BJ (cell line): ENCODE measurements at regions of chr14 and their contacts with region 1.

Region 1: DNA sequence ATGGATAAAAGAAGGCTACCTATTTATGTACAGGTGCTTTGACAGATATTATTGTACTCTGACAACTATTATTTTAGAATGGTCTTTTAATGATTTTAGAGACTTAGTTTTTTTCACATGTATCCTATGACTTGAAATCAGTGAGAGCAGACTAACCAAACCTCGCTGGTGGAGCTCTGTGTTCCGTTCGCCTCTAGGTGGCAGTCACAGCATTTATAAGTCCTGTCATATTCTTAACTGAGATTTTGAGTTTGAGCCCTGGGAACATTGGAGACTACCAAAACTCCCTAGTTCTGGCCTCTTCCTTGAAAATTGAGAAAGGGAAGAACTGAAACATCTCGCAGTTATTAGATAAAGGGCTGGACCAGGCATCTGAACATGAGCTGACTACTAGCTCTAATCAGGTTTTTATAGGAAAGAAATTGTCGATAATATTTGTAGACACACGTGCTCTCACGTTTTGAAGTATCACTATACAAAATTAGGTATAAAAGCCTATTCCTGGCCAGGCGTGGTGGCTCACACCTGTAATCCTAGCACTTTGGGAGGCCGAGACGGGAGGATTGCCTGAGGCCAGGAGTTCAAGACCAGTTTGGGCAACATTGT is 48.3 kb downstream of the TTLL5 start:
- DNase-seq: peak; percentile 20
- H3K4me3 ChIP-seq: no peak overlapping the region
- H3K27me3 ChIP-seq: no peaks in the 10 kb centered on the region
- CTCF ChIP-seq: peak; percentile 78

Region 2: DNA sequence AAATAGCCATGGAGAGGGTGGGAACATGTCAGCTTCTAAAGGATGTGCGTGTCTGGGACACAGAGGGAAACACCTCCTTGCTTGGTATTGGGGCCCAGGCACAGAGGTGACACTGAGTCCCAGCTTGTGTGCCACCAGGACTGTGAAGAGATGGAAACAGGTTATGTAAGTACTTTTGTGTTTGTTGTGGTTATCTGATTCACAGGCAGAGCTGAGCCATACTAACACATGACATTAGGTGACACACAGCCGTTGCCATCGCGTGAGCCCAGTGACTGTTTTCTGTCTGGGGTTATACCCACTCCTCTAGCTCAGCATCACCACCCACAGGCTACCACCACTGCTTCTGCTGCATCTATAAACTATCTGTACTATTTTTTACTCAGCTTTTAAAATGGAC is 143.0 kb before region 1 on chr14:
- CTCF ChIA-PET with region 1: no interaction called
- POLR2A ChIA-PET with region 1: no interaction called
- DNase-seq: no peak
- H3K4me3 ChIP-seq: no peak overlapping the region
- H3K27me3 ChIP-seq: peaks cover 15% of the 10 kb centered on the region
- CTCF ChIP-seq: no peak

Region 3: DNA sequence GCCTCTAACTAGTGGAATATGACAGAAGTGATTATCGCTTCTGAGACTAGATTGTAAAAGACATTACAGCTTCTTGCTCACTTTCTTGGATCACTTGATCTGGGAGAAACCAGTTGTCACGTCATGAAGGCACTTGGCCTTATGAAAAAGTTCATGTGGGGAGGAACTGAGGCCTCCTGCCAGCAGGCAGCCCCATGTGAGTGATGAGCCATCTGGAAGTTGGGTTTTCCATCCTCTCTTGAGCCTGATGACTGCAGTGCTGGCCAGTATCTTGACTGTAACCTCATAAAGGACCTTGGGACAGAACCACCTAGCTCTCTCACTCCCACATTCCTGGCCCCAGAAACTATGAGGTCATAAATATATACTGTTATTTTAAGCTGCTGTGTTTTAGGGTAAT is 20.3 kb before region 1 on chr14:
- CTCF ChIA-PET with region 1: interaction called, 10 read pairs
- POLR2A ChIA-PET with region 1: no interaction called
- DNase-seq: peak; percentile 10
- H3K4me3 ChIP-seq: no peak overlapping the region
- H3K27me3 ChIP-seq: no peaks in the 10 kb centered on the region
- CTCF ChIP-seq: no peak

Region 4: GRCh38 chr14:75794615-75795038 is 85.3 kb after region 1 on chr14:
- CTCF ChIA-PET with region 1: interaction called, 34 read pairs
- POLR2A ChIA-PET with region 1: no interaction called
- DNase-seq: peak; percentile 10
- H3K4me3 ChIP-seq: no peak overlapping the region
- H3K27me3 ChIP-seq: no peaks in the 10 kb centered on the region
- CTCF ChIP-seq: peak; percentile 55

Region 5: GRCh38 chr14:75896341-75896740 is 187.0 kb after region 1 on chr14:
- CTCF ChIA-PET with region 1: no interaction called
- POLR2A ChIA-PET with region 1: no interaction called
- DNase-seq: no peak
- H3K4me3 ChIP-seq: no peak overlapping the region
- H3K27me3 ChIP-seq: no peaks in the 10 kb centered on the region
- CTCF ChIP-seq: no peak

Region 6: GRCh38 chr14:75906676-75907280 is 197.5 kb after region 1 on chr14:
- CTCF ChIA-PET with region 1: interaction called, 36 read pairs
- POLR2A ChIA-PET with region 1: no interaction called
- DNase-seq: no peak
- H3K4me3 ChIP-seq: no peak overlapping the region
- H3K27me3 ChIP-seq: no peaks in the 10 kb centered on the region
- CTCF ChIP-seq: peak; percentile 85

Region 7: DNA sequence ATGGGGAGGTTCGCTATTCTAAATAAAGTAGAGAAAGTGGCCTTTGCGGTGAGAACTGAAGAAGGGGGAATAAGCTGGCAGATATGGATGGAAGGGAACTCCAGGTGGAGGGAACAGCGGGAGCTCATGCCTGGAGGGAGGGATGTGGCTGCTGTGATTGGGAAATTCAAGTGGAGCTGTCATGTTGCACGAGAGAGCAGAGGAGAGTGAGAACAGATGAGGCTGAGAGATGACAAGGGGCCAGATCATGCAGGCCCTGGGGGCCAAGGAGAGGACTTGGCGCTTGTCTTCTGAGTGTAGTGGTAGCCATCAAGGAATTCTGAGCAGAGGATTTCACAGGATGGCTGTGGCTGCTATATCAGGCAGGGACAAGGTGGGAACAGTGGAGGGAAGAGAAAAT is 237.5 kb after region 1 on chr14:
- CTCF ChIA-PET with region 1: no interaction called
- POLR2A ChIA-PET with region 1: no interaction called
- DNase-seq: no peak
- H3K4me3 ChIP-seq: no peak overlapping the region
- H3K27me3 ChIP-seq: no peaks in the 10 kb centered on the region
- CTCF ChIP-seq: no peak

Region 8: GRCh38 chr14:76007852-76008251 is 298.5 kb after region 1 on chr14:
- CTCF ChIA-PET with region 1: interaction called, 10 read pairs
- POLR2A ChIA-PET with region 1: no interaction called
- DNase-seq: no peak
- H3K4me3 ChIP-seq: no peak overlapping the region
- H3K27me3 ChIP-seq: no peaks in the 10 kb centered on the region
- CTCF ChIP-seq: no peak

Region 9: DNA sequence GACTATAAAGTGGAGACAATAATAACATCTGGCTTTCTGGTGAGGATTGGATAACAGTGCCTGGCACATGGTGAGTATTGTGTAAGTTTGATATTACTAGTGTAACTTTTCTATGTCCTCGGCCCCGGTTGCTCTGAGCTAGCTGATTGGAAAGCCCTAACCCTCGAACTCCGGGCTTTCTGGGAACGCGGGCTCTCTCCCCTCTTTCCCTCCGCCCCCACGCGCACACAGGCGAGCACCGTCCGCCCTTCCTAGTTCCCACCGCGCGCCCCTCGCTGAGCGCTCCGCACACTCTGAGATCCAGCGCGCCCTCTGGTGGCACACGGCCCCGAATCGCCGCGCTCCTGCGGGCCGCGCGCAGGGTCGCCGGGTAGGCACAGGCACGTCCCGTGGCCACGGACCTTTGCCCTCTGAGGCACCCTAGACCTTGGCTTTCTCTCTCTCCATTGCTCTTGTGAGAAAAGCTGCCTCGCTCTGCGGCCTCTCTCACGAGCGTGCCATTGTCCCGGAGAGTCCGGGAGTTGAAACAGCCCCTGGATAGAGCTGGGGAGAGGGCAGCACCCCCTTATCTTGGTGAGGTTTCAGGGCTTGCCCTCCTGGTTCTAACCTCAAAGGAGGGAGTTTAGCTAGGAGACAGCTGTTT is 643.5 kb after region 1 on chr14:
- CTCF ChIA-PET with region 1: interaction called, 36 read pairs
- POLR2A ChIA-PET with region 1: no interaction called
- DNase-seq: no peak
- H3K4me3 ChIP-seq: peak overlapping the region; percentile 23
- H3K27me3 ChIP-seq: peaks cover 9% of the 10 kb centered on the region
- CTCF ChIP-seq: peak; percentile 81